ENCODE measurements at regions of chr2 and their contacts with region 1.

Region 1: GRCh38 chr2:55180374-55180773 is 51.7 kb downstream of the CLHC1 start:
- DNase-seq: no peak
- H3K4me3 ChIP-seq: no peak overlapping the region
- H3K27ac ChIP-seq: no peak overlapping the region
- H3K4me1 ChIP-seq: no peaks in the 10 kb centered on the region
- H3K27me3 ChIP-seq: no peaks in the 10 kb centered on the region
- CTCF ChIP-seq: no peak

Region 2: GRCh38 chr2:54755641-54756326 is 424.6 kb before region 1 on chr2:
- intact Hi-C with region 1: loop called (anchors 10 kb)
- DNase-seq: no peak
- H3K4me3 ChIP-seq: no peak overlapping the region
- H3K27ac ChIP-seq: no peak overlapping the region
- H3K4me1 ChIP-seq: no peaks in the 10 kb centered on the region
- H3K27me3 ChIP-seq: no peaks in the 10 kb centered on the region
- CTCF ChIP-seq: no peak

Region 3: DNA sequence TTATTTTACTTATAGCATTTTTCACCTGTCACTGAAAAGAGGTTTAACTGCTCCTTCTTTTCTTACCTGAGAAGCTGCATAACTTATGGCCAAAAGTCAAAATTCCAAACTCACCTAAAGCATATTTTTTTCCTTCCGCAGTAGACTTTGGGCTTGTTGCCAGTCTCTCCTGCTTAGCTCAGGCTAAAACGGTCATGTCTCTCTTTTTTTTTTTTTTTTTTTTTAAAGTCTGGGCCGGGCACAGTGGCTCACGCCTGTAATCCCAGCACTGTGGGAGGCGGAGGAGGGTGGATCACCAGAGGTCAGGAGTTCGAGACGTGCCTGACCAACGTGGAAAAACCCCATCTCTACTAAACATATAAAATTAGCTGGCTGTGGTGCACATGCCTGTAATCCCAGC is 243.6 kb before region 1 on chr2:
- intact Hi-C with region 1: no loop called
- DNase-seq: no peak
- H3K4me3 ChIP-seq: no peak overlapping the region
- H3K27ac ChIP-seq: no peak overlapping the region
- H3K4me1 ChIP-seq: no peaks in the 10 kb centered on the region
- H3K27me3 ChIP-seq: peaks cover 53% of the 10 kb centered on the region
- CTCF ChIP-seq: no peak

Region 4: GRCh38 chr2:55014962-55015939 is 165.1 kb before region 1 on chr2:
- intact Hi-C with region 1: no loop called
- DNase-seq: no peak
- H3K4me3 ChIP-seq: no peak overlapping the region
- H3K27ac ChIP-seq: no peak overlapping the region
- H3K4me1 ChIP-seq: peaks cover 54% of the 10 kb centered on the region
- H3K27me3 ChIP-seq: no peaks in the 10 kb centered on the region
- CTCF ChIP-seq: peak; percentile 80

Region 5: DNA sequence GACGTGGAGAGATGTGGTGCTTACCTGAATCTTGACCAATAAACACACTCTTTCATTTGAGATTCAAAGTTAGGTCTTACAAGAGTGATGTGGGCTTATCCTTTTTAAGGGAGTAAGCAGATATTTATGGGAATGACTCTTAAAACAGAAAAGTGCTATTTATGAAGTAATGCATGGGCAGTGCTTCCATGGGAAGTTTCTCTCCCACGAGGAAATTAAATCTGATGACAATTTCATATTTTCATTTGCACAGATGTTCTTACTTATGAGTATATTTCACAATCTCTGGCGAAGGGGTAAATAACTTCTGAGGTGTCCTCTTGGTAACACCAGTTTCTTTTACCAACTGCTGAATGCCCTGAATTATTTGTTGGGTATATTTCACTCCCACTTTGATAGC is 492.3 kb after region 1 on chr2:
- intact Hi-C with region 1: no loop called
- DNase-seq: no peak
- H3K4me3 ChIP-seq: no peak overlapping the region
- H3K27ac ChIP-seq: no peak overlapping the region
- H3K4me1 ChIP-seq: no peaks in the 10 kb centered on the region
- H3K27me3 ChIP-seq: no peaks in the 10 kb centered on the region
- CTCF ChIP-seq: no peak

Region 6: GRCh38 chr2:56183643-56184499 is 1003.5 kb after region 1 on chr2 and contains the start of gene CCDC85A:
- intact Hi-C with region 1: no loop called
- DNase-seq: peak; percentile 83
- H3K4me3 ChIP-seq: peak within 1 kb of the TSS; percentile 82
- H3K27ac ChIP-seq: peak within 1 kb of the TSS; percentile 90
- H3K4me1 ChIP-seq: peaks cover 52% of the 10 kb centered on the region
- H3K27me3 ChIP-seq: peaks cover 65% of the 10 kb centered on the region
- CTCF ChIP-seq: peak; percentile 96
- total RNA-seq, gene CCDC85A: 4.4 TPM

Measured in left ventricle myocardium inferior (tissue), 1 donor.